ENCODE measurements at regions of chr12 and their contacts with region 1.

Region 1: DNA sequence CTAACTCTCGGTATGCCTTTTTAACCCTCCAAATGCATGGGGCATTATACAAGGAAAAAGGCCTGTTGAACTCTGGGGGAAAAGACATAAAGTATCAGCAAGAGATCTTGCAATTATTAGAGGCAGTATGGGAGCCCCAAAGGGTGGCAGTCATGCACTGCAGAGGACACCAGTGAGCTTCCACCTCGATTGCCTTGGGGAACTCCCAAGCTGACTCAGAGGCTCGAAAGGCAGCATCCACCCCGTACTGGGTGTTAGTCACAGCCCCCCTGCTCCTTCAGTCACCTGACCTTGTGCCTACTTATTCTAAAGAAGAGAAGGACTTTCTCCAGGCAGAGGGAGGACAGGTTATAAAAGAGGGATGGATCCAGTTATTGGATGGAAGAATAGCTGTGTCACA is 781.4 kb upstream of the TMEM132C start:
- DNase-seq: peak; percentile 81
- H3K4me3 Mint-ChIP-seq: no peak overlapping the region
- H3K27ac Mint-ChIP-seq: no peak overlapping the region
- H3K4me1 Mint-ChIP-seq: peaks cover 7% of the 10 kb centered on the region
- H3K27me3 Mint-ChIP-seq: no peaks in the 10 kb centered on the region

Region 2: GRCh38 chr12:127429551-127430285 is 55.8 kb before region 1 on chr12:
- intact Hi-C with region 1: no loop called
- DNase-seq: no peak
- H3K4me3 Mint-ChIP-seq: no peak overlapping the region
- H3K27ac Mint-ChIP-seq: no peak overlapping the region
- H3K4me1 Mint-ChIP-seq: no peaks in the 10 kb centered on the region
- H3K27me3 Mint-ChIP-seq: no peaks in the 10 kb centered on the region

Region 3: GRCh38 chr12:128069359-128069997 is 584.0 kb after region 1 on chr12:
- intact Hi-C with region 1: loop called (anchors 2 kb)
- DNase-seq: peak; percentile 71
- H3K4me3 Mint-ChIP-seq: no peak overlapping the region
- H3K27ac Mint-ChIP-seq: no peak overlapping the region
- H3K4me1 Mint-ChIP-seq: no peaks in the 10 kb centered on the region
- H3K27me3 Mint-ChIP-seq: no peaks in the 10 kb centered on the region